ENCODE measurements at regions of chr5 and their contacts with region 1.

Region 1: DNA sequence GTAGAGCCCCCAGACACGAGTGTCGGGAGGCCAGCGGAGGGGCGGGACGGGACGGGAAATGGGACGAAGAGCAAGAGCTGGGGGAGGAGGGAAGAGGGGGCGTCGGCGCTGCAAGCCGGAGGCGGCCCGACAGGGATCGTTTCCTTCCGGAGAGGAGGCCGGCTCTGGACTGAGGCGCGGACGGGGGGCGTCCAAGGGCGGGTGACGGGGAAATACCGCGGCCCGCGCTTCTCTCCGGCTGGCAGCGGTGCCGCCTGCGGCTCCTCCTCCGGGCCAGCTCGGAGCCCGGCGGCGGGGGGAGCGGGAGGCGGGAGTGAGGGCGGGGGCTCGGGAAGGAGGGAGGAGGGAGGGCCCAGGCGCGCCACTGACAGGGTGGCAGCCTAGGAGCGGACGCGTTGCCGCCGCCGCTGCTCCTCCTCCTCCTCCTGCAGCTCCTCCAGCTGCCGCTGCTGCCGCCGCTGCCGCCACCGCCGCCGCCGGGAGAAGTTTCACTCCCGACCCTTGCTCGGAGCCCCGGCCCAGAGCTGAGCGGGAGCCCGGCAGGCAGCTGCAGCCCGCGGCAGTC is at the start of gene CHSY3:
- ATAC-seq: peak; percentile 75 to 87 (median 85)
- H3K4me3 ChIP-seq: peak within 1 kb of the TSS; percentile 60 to 91 (median 71)
- H3K27ac ChIP-seq: no peak within 1 kb of the TSS
- H3K4me1 ChIP-seq: peaks cover 0 to 8% of the 10 kb centered on the region in 2 donors
- total RNA-seq, gene CHSY3: 0.42 to 6.8 (median 1.8) TPM

Region 2: DNA sequence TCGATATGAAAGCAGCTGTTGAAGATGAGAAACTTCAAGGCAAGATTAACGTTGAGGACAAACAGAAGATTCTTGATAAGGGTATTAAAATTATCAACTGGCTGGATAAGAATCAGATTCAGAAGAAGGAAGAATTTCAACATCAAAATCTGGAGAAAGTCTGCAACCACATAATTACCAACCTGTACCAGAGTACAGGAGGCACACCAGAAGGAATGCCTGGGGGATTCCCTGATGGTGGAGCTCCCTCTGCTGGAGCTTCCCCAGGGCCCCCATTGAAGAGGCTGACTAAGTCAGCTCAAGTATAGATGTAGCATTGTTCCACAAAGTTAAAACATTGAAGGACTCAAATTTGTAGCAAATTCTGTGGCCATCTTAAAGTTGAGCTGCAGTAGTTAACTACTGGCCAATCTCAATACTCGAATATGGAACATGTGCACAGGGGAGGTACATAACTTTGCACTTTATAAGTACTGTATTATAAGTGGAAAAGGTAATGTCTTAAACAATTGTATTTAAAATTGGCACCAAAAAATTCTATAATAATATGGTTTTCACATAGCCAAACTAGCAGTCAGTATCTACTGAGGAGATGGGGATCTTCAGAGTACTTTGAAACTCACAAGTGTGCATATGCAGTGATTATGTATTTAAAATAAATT is 237.6 kb after region 1 on chr5:
- in situ Hi-C with region 1: loop called in 2 of 9 experiments (anchors 25 kb)
- ATAC-seq: peak in 3 of 8 experiments; percentile 70 to 96 (median 87)
- H3K4me3 ChIP-seq: no peak overlapping the region
- H3K27ac ChIP-seq: no peak overlapping the region
- H3K4me1 ChIP-seq: no peaks in the 10 kb centered on the region